Mammary epithelial cell (primary cell): ENCODE measurements at regions of chr20 and their contacts with region 1.

Region 1: DNA sequence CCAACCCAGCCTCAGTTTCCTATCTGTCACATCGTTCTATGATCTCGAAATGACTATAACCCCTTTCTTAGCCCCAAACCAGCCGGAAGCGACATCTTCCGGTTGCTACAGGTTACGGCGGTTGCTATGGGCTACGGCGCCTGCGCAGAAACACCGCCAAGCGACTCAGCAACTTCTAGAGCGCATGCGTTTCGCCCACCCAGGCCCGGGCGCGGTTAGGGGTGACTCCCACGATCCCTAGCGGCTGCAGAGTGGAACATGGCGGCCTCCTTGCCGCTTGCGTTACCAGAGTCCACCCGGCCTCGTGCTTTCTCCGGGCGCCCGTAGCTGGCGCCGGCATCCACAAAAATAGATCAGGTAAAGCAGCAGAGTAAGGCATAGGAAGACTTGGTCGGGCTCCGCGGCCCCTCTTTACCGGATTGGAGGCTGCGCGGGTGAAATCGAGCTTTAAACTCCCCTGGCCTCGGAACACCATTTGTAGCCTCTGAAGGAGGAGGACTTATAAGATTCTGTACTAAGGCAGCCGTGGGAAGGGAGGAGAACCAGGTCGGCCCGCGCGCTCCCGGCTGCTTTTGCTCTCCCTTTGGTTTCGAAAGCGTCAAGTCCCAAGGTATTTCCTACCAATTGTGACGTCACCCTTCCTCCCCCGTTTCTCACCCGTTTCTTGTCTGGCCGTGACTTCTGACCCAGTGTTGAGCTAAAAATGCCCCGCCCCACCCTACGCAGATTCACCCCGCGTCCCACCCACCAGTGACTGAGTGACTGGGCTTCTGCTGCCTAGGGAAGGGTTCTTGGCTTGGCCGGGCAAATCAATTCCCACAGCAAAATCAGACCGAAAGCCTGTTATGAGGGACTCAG is 3.5 kb downstream of the SDCBP2 start:
- DNase-seq: peak; percentile 92
- H3K4me3 ChIP-seq: peak overlapping the region; percentile 62 to 91 (median 80)
- H3K27ac ChIP-seq: peak overlapping the region; percentile 99
- H3K4me1 ChIP-seq: peaks cover 53% of the 10 kb centered on the region
- H3K27me3 ChIP-seq: no peaks in the 10 kb centered on the region
- CTCF ChIP-seq: no peak

Region 2: DNA sequence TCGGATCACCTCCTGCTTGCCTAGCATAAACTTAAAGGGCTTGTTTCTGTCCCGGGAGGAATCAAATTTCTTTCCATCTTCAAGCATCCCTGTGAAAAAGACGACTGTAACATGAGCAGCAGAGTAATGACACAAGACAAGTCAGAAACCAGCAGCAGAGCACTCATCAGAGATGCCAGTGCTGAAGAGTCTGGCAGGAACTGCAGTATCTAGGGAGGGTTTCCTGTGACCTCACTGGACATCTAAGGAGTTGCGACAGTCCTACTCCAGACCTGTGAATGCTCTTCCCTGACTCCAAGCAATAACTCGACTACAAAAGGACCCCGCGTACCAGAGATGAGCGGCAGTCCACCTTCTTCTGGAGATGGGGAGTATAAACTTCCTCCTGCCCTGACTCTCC is 50.1 kb after region 1 on chr20:
- CTCF ChIA-PET with region 1: no interaction called
- dilution Hi-C with region 1: no loop called
- in situ Hi-C with region 1: no loop called
- intact Hi-C with region 1: loop called (anchors 5 kb)
- DNase-seq: peak; percentile 37
- H3K4me3 ChIP-seq: no peak overlapping the region
- H3K27ac ChIP-seq: no peak overlapping the region
- H3K4me1 ChIP-seq: peaks cover 71% of the 10 kb centered on the region
- H3K27me3 ChIP-seq: no peaks in the 10 kb centered on the region
- CTCF ChIP-seq: no peak

Region 3: GRCh38 chr20:1392823-1393506 is 67.6 kb after region 1 on chr20 and contains the start of gene FKBP1A:
- CTCF ChIA-PET with region 1: no interaction called
- dilution Hi-C with region 1: no loop called
- in situ Hi-C with region 1: no loop called
- intact Hi-C with region 1: loop called (anchors 2 kb)
- DNase-seq: peak; percentile 92
- H3K4me3 ChIP-seq: peak within 1 kb of the TSS; percentile 57 to 84 (median 76)
- H3K27ac ChIP-seq: peak within 1 kb of the TSS; percentile 57
- H3K4me1 ChIP-seq: peaks cover 43% of the 10 kb centered on the region
- H3K27me3 ChIP-seq: no peaks in the 10 kb centered on the region
- CTCF ChIP-seq: no peak
- total RNA-seq, gene FKBP1A: 139 to 425 TPM

Region 4: DNA sequence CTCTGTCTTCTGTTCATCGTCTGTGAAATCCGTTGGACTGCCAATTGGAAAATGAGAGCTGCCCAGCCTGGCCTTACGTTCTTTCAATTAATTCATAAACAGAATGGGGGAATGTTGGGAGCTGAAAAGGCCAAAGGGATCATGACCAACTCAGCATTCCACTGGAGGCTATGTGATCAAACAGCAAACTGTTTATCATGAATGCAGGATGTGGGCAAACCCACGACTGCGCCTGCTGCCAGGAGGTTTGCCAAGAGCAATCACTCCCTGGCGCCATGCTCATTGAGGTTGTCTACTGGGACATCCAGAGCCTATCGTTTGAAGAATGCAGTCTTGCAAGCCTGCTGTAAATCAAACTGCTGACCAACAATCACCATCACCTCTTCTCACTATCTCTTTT is 76.7 kb after region 1 on chr20:
- CTCF ChIA-PET with region 1: no interaction called
- dilution Hi-C with region 1: loop called (anchors 5 kb)
- in situ Hi-C with region 1: no loop called
- intact Hi-C with region 1: no loop called
- DNase-seq: peak; percentile 73
- H3K4me3 ChIP-seq: no peak overlapping the region
- H3K27ac ChIP-seq: no peak overlapping the region
- H3K4me1 ChIP-seq: peaks cover 36% of the 10 kb centered on the region
- H3K27me3 ChIP-seq: no peaks in the 10 kb centered on the region
- CTCF ChIP-seq: no peak

Region 5: DNA sequence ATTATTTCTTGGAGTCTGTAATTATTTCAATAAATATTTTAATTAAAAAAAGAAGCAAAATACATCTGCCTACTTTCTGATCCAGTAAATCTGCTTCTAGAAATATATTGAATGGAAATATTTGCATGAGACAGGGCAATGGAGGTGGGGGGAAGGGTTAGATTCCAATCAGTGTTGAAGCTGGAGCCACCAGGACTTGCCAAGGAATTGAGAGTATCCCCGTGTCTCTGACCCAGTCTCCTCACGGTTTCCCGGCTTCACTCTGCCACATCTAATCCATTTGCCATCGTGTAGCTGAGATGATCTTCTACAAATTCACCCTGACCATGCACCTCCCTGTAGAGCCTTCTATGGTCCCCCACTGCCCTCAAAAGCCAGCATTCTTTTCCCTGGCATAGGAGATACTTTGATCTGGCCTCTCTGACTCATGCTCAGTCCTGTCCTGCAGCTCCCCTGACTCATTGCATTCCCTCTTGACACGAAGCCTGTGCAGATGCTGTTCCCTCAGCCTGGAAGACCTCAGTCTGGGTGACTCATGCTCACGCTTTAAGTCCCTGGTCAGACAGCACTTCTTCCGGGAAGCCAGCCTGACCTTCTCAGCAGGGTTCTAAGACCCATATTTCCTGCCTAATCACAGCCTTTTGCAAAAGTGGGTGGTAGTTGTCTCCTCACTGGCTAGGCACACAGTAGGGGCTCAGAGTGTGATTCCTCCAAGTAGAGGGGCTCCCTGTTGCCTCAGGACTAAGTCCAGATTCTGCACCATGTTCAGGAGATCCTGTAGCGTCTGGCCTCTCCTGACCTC is 90.5 kb after region 1 on chr20:
- CTCF ChIA-PET with region 1: no interaction called
- dilution Hi-C with region 1: no loop called
- in situ Hi-C with region 1: no loop called
- intact Hi-C with region 1: loop called (anchors 1 kb)
- DNase-seq: peak; percentile 98
- H3K4me3 ChIP-seq: no peak overlapping the region
- H3K27ac ChIP-seq: peak overlapping the region; percentile 68
- H3K4me1 ChIP-seq: peaks cover 40% of the 10 kb centered on the region
- H3K27me3 ChIP-seq: no peaks in the 10 kb centered on the region
- CTCF ChIP-seq: no peak

Region 6: GRCh38 chr20:1721687-1722512 is 396.5 kb after region 1 on chr20:
- CTCF ChIA-PET with region 1: no interaction called
- dilution Hi-C with region 1: no loop called
- in situ Hi-C with region 1: no loop called
- intact Hi-C with region 1: no loop called
- DNase-seq: peak; percentile 80
- H3K4me3 ChIP-seq: no peak overlapping the region
- H3K27ac ChIP-seq: no peak overlapping the region
- H3K4me1 ChIP-seq: peaks cover 43% of the 10 kb centered on the region
- H3K27me3 ChIP-seq: no peaks in the 10 kb centered on the region
- CTCF ChIP-seq: no peak